Activated CD4-positive, alpha-beta memory T cell treated with anti-CD3 and anti-CD28 coated beads for 36 hours (primary cell): ENCODE measurements at regions of chr9 and their contacts with region 1.

Region 1: DNA sequence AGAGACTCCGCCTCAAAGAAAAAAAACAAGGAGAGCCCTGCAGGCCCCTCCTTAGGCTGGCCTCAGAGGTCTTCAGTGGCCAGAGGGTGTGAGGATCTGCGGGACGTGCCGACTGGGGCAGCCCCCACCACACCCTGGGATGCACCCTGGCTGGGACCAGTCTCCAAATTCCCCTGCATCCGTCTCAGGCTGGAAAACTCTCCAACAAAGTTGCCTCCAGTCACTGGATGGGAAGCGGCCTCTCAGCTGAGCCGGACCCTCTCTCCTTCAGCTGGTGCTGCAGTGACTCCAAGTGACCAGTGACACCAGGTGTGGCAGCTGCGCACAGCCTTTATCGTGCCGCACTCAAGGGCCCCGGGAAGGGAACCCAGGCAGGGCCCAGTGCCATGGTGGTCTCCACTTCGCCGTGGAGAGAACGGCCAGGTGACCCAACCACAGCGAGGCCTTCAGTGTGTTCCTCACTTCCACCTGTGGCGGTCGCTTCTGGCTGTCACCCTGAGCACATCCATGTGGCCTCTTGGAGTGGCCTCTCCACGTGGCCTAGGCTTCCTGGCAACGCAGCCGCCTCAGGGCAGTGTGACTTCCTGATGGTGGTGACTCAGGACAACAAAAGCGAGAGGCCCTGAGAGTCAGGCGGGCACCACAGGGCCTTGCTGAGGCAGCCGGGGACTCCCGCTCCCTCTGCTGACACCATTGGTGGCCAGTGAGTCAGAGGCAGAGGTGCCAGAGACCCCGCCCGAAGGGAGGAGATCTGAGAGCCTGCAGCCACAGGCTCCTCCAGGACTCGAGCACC is 19.3 kb upstream of the CAMSAP1 start:
- DNase-seq: peak; percentile 96
- H3K4me3 Mint-ChIP-seq: no peak overlapping the region
- H3K27ac Mint-ChIP-seq: peak overlapping the region; percentile 93
- H3K4me1 Mint-ChIP-seq: peaks cover 34% of the 10 kb centered on the region
- H3K27me3 Mint-ChIP-seq: no peaks in the 10 kb centered on the region

Region 2: DNA sequence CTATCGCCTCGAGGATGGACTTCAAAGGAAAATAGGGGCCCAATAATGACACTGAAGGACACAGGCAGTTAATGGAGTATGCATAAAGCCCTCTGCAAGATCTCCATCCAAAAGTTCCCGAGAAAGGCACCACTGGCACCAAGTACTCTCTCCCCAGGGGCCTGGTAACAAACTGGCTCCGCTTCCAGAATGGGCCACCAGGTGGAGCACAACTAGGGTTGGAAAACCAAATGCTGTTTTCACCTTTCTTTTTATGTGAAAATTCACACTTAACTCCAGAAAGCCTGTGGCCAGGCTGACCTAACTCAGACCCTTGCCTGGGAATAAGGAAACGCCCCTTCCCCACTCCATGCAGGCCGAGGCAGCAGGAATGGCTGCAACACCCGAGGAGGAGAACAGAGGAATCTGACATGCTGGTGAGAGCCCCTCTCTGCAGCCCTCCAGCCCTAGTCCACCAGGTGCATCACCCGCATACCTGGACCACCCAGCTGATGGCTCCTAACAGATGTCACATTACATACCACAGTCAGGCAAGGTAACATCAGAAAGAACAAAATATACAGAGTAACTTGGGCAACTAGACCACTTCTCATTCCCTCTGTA is 62.0 kb before region 1 on chr9:
- CTCF ChIA-PET with region 1: interaction called, 16 read pairs
- POLR2A ChIA-PET with region 1: no interaction called
- intact Hi-C with region 1: loop called (anchors 1 kb)
- DNase-seq: peak; percentile 81
- H3K4me3 Mint-ChIP-seq: no peak overlapping the region
- H3K27ac Mint-ChIP-seq: no peak overlapping the region
- H3K4me1 Mint-ChIP-seq: peaks cover 51% of the 10 kb centered on the region
- H3K27me3 Mint-ChIP-seq: no peaks in the 10 kb centered on the region

Region 3: GRCh38 chr9:135939351-135940265 is 13.0 kb after region 1 on chr9:
- CTCF ChIA-PET with region 1: interaction called, 3 read pairs
- POLR2A ChIA-PET with region 1: interaction called, 6 read pairs
- intact Hi-C with region 1: loop called (anchors 1 kb)
- DNase-seq: peak; percentile 72
- H3K4me3 Mint-ChIP-seq: peak overlapping the region; percentile 73
- H3K27ac Mint-ChIP-seq: peak overlapping the region; percentile 89
- H3K4me1 Mint-ChIP-seq: peaks cover 13% of the 10 kb centered on the region
- H3K27me3 Mint-ChIP-seq: peaks cover 3% of the 10 kb centered on the region

Region 4: DNA sequence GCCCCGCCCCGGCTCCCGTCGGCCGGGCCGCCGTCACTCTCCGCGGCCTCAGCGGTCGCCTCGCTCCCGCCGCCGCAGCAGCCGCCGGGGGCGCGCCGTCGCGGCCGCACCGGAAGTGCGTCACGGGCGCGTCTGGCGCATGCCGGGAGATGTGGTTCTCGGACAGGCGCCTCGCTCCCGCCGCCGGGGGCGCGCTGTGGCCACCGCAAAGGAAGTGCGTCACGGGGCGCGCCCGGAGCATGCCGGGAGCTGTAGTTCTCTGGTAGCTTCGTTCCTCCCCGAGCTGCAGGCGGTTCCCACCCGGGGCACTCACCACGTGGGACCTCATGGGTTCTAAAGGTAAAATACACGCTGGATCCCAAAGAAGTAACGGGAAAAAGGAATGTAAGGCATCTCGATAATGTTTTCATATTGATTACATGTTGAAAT is 34.7 kb after region 1 on chr9 and contains the start of gene UBAC1:
- CTCF ChIA-PET with region 1: no interaction called
- POLR2A ChIA-PET with region 1: interaction called, 3 read pairs
- intact Hi-C with region 1: loop called (anchors 2 kb)
- DNase-seq: peak; percentile 96
- H3K4me3 Mint-ChIP-seq: peak within 1 kb of the TSS; percentile 87
- H3K27ac Mint-ChIP-seq: peak within 1 kb of the TSS; percentile 66
- H3K4me1 Mint-ChIP-seq: peaks cover 35% of the 10 kb centered on the region
- H3K27me3 Mint-ChIP-seq: peaks cover 1% of the 10 kb centered on the region
- total RNA-seq, gene UBAC1: 41.3 to 42.0 TPM